Posterior vena cava (tissue), 2 donors: ENCODE measurements at regions of chr3 and their contacts with region 1.

Region 1: GRCh38 chr3:185754920-185755319 is 69.9 kb downstream of the IGF2BP2 start:
- DNase-seq: no peak

Region 2: DNA sequence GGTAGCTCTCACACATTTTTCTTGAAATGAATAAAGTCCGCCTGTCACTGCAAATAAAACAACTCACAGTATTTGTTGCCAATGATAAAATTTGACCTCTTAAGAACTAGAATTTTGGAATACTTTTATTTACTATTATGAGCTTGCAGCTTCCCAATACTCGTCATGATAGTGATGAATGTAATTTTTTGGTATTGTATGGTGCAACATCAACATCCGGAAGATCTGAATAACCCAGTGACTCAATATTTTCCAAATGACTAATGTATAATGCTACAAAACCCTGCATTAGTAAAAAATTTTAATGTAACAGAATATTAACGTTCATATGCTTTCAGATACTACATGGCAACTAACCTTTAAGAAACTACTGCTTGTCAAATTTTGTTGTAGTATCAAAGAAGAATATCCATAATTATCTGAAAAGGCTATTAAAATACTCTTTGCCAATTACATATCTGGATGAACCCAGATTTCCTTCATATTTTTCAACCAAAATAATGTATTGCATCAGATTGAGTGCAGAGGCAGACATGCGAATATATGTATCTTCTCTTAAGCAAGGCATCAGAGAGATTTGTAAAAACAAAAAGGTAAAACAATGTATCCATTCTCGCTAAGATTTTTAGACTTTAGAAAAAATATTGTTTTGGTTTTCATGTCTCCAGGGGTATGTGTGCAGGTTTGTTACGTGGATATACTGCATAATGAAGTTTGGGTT is 25.4 kb before region 1 on chr3:
- intact Hi-C with region 1: loop called in 1 of 2 experiments (anchors 2 kb)
- DNase-seq: no peak

Region 3: DNA sequence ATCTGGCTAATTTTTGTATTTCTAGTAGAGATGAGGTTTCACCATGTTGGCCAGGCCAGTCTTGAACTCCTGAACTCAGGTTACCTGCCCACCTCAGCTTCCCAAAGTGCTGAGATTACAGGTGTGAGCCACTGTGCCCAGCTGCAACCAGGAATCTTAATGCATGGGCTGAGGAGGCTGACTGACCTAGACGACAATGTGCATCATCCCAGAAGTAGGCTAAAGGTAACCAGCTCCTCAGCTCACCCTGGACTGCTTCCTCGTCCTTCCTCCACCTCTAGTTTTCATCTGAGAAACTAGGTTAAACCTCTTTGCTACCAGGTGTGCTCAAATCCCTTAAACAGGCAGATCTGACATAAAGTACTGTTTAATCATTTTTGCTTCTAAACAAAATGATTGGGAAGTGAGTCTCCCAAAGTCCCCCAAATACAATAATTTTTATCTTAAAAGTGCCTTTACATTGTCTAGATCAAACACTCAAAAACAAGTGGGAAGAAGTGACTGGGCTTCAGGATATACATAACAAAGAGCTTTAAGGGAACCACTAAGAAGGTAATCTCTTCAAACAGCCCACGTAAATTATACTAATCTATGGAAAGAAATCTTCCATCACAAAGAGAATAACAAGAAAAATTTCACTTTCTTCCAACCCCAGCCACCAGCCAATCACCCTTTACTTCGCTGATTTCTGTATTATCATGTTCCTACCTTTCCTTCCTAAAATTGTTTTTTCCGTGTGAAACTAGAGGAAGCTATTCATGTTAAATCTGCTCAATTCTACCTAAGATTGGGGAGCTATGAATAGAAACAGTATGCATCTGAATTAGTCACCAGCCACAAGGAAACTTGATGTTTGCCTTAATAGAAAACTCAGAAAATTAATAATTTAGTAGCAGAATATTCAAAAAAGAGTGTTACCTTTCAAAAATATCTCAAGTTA is 35.2 kb after region 1 on chr3:
- intact Hi-C with region 1: no loop called
- DNase-seq: no peak

Region 4: DNA sequence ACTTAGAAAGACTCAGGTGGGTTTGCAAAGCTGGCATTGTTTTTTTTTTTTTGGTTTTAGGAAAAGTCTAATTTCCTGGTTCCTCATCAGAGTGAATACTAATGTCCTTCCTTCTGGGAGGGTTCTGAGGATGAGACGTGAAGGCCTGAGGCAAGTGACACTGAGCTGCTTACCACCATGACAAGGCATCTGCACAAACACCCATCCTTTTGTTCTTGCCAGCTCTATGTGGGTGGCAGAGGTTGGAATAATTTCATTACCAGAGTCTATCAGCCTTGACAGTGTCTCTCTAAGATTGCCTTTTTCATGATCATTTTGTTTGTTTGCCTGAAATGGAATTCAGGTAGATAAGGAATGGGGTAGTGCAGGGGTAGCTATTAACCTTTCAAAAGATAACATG is 1630.4 kb after region 1 on chr3:
- intact Hi-C with region 1: no loop called
- DNase-seq: no peak